T-cell (primary cell): ENCODE measurements at regions of chr6 and their contacts with region 1.

Region 1: GRCh38 chr6:111565326-111566221 is 40.1 kb downstream of the TRAF3IP2 start:
- DNase-seq: peak in 5 of 35 experiments; percentile 3 to 39 (median 5)
- ATAC-seq: peak in 1 of 4 experiments; percentile 64
- H3K4me3 ChIP-seq: no peak overlapping the region
- H3K4me3 Mint-ChIP-seq: no peak overlapping the region
- H3K27ac ChIP-seq: no peak overlapping the region
- H3K27ac Mint-ChIP-seq: peak overlapping the region; percentile 35 to 50
- H3K4me1 ChIP-seq: peaks cover 15 to 17% of the 10 kb centered on the region in 2 experiments
- H3K4me1 Mint-ChIP-seq: peaks cover 34 to 48% (median 42%) of the 10 kb centered on the region in 3 donors
- H3K27me3 ChIP-seq: no peaks in the 10 kb centered on the region
- H3K27me3 Mint-ChIP-seq: no peaks in the 10 kb centered on the region

Region 2: DNA sequence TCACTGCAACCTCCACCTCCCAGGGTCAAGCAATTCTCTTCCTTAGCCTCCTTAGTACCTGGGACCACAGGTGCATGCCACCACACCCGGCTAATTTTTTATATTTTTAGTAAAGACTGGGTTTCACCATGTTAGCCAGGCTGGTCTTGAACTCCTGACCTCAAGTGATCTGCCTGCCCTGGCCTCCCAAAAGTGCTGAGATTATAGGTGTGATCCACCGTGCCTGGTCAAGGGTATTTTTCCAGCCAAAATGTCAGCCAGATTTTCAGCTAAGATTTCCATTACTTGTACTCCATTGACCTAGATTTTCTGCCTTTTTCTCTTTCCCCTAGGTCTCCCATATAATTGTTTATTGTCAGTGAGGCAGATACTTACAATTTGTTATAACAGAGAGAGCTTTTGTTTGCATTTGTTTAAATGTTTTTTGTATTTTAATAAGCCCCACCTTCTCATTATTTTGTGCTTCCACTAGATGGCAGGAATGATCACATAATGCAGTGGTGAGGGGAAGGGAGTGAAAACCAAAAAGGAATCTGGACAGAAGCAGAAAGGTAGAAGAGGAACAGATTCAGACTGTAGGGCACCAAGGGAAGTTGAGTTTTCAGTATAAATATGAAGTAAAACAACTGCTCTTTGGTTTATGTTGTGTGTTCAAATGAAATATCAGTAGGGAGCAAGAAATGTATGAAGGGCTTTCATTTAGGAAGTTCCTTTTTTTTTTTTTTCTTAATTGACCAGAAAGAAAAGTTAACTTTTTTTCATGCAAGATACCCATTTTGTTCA is 554.0 kb before region 1 on chr6:
- CTCF ChIA-PET with region 1: interaction called in 1 of 2 experiments, 10 read pairs
- POLR2A ChIA-PET with region 1: interaction called in 1 of 2 experiments, 6 read pairs
- DNase-seq: peak in 4 of 35 experiments; percentile 3 to 64 (median 10)
- ATAC-seq: peak in 3 of 4 experiments; percentile 34 to 55 (median 45)
- H3K4me3 ChIP-seq: no peak overlapping the region
- H3K4me3 Mint-ChIP-seq: no peak overlapping the region
- H3K27ac ChIP-seq: no peak overlapping the region
- H3K27ac Mint-ChIP-seq: no peak overlapping the region
- H3K4me1 ChIP-seq: no peaks in the 10 kb centered on the region
- H3K4me1 Mint-ChIP-seq: peaks cover 4 to 8% (median 6%) of the 10 kb centered on the region in 3 donors
- H3K27me3 ChIP-seq: no peaks in the 10 kb centered on the region
- H3K27me3 Mint-ChIP-seq: no peaks in the 10 kb centered on the region

Region 3: GRCh38 chr6:111280445-111280955 is 285.1 kb before region 1 on chr6:
- CTCF ChIA-PET with region 1: no interaction called
- POLR2A ChIA-PET with region 1: no interaction called
- DNase-seq: no peak
- ATAC-seq: no peak
- H3K4me3 ChIP-seq: no peak overlapping the region
- H3K4me3 Mint-ChIP-seq: no peak overlapping the region
- H3K27ac ChIP-seq: no peak overlapping the region
- H3K27ac Mint-ChIP-seq: no peak overlapping the region
- H3K4me1 ChIP-seq: no peaks in the 10 kb centered on the region
- H3K4me1 Mint-ChIP-seq: peaks cover 0 to 6% (median 0%) of the 10 kb centered on the region in 3 donors
- H3K27me3 ChIP-seq: no peaks in the 10 kb centered on the region
- H3K27me3 Mint-ChIP-seq: no peaks in the 10 kb centered on the region

Region 4: GRCh38 chr6:111553580-111553979 is 12.0 kb before region 1 on chr6:
- CTCF ChIA-PET with region 1: no interaction called
- POLR2A ChIA-PET with region 1: interaction called in 1 of 2 experiments, 16 read pairs
- DNase-seq: no peak
- ATAC-seq: no peak
- H3K4me3 ChIP-seq: no peak overlapping the region
- H3K4me3 Mint-ChIP-seq: no peak overlapping the region
- H3K27ac ChIP-seq: no peak overlapping the region
- H3K27ac Mint-ChIP-seq: no peak overlapping the region
- H3K4me1 ChIP-seq: no peaks in the 10 kb centered on the region
- H3K4me1 Mint-ChIP-seq: peaks cover 0 to 5% (median 2%) of the 10 kb centered on the region in 3 donors
- H3K27me3 ChIP-seq: no peaks in the 10 kb centered on the region
- H3K27me3 Mint-ChIP-seq: no peaks in the 10 kb centered on the region